ENCODE measurements at regions of chr15 and their contacts with region 1.

Region 1: GRCh38 chr15:101641166-101641764 is 10.9 kb downstream of the TM2D3 start:
- DNase-seq: peak; percentile 68 to 73
- ATAC-seq: peak in 1 of 2 experiments; percentile 75; a peak in 3 of 6 replicates
- H3K4me3 ChIP-seq: no peak overlapping the region
- H3K27ac ChIP-seq: no peak overlapping the region
- H3K4me1 ChIP-seq: peaks cover 11% of the 10 kb centered on the region
- CTCF ChIP-seq: peak; percentile 98
- EP300 ChIP-seq: no peak
- POLR2A ChIP-seq: no peak
- RAD21 ChIP-seq: peak; percentile 94 to 98

Region 2: DNA sequence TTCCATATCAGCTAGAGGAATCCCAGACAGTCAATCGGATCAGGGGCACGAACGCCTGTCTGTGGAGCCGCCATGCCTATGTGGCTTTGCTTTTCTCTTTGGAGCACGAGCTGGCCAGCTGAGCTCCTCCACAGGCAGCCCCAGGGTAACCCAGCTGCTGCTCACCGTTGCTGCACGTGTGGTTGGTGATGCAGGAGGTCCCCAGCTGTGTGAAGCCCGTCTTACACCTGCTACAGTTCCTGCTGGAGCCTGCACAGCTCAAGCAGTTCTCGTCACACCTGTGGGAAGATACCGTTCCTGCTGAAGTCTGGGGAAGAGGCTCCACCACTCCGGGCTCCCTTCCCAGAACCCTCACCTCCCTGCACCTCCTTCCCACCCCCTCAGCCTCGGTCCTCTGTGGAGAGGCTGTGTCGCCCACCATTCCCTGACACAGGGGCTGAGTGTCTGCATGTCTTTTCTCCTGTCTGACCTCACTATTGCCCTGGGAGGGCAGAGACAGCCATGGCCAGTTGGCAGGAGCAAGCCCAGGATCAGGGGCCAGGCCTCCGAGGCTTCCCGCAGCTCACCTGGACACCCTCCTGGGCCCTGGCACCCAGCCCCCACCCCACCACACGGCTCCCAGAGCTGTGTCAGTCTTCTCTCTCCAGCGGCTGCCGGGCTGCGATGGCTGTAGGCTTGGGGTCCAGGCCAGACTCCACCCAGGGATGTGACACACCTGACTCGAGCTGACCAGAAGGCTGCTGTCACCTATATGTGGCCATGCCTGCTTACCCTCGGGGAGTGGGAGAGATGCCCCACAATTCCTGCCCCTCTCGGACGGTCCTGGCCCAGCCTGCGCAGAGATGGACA is 334.0 kb before region 1 on chr15:
- CTCF ChIA-PET with region 1: interaction called, 227 read pairs
- POLR2A ChIA-PET with region 1: no interaction called
- DNase-seq: no peak
- ATAC-seq: peak in 1 of 2 experiments; percentile 11; a peak in 3 of 6 replicates
- H3K4me3 ChIP-seq: no peak overlapping the region
- H3K27ac ChIP-seq: no peak overlapping the region
- H3K4me1 ChIP-seq: no peaks in the 10 kb centered on the region
- CTCF ChIP-seq: no peak
- EP300 ChIP-seq: no peak
- POLR2A ChIP-seq: no peak
- RAD21 ChIP-seq: no peak

Region 3: DNA sequence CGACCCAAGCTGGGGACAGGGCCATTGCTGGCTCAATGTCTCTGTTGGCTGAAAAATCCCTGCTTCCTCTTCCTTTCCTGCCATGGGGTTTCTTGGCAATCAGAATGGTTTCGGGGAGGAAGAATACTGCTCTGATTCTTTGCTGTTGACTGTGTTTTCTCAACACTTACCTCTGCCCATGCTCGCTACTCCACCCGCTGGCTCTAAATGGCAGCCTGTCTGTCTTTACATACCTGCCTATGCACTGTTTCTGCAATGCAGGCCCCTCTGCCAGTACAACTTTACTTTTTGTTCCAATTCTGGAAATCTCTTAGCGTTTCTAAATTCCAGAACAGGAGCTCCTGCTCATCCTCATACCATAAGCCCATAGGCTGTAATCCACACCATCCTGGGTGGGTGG is 307.9 kb before region 1 on chr15:
- CTCF ChIA-PET with region 1: interaction called, 11 read pairs
- POLR2A ChIA-PET with region 1: no interaction called
- DNase-seq: no peak
- ATAC-seq: no peak
- H3K4me3 ChIP-seq: no peak overlapping the region
- H3K27ac ChIP-seq: no peak overlapping the region
- H3K4me1 ChIP-seq: no peaks in the 10 kb centered on the region
- CTCF ChIP-seq: no peak
- EP300 ChIP-seq: no peak
- POLR2A ChIP-seq: no peak
- RAD21 ChIP-seq: no peak

Region 4: GRCh38 chr15:101439285-101439919 is 201.9 kb before region 1 on chr15:
- CTCF ChIA-PET with region 1: interaction called, 14 read pairs
- POLR2A ChIA-PET with region 1: no interaction called
- DNase-seq: peak in 1 of 2 experiments; percentile 65
- ATAC-seq: peak; percentile 51 to 76
- H3K4me3 ChIP-seq: no peak overlapping the region
- H3K27ac ChIP-seq: peak overlapping the region; percentile 66 to 79
- H3K4me1 ChIP-seq: peaks cover 48% of the 10 kb centered on the region
- CTCF ChIP-seq: no peak
- EP300 ChIP-seq: peak in 1 of 2 experiments; percentile 51; a peak in 1 of 5 replicates
- POLR2A ChIP-seq: no peak
- RAD21 ChIP-seq: peak in 1 of 2 experiments; percentile 31; a peak in 2 of 5 replicates

Region 5: DNA sequence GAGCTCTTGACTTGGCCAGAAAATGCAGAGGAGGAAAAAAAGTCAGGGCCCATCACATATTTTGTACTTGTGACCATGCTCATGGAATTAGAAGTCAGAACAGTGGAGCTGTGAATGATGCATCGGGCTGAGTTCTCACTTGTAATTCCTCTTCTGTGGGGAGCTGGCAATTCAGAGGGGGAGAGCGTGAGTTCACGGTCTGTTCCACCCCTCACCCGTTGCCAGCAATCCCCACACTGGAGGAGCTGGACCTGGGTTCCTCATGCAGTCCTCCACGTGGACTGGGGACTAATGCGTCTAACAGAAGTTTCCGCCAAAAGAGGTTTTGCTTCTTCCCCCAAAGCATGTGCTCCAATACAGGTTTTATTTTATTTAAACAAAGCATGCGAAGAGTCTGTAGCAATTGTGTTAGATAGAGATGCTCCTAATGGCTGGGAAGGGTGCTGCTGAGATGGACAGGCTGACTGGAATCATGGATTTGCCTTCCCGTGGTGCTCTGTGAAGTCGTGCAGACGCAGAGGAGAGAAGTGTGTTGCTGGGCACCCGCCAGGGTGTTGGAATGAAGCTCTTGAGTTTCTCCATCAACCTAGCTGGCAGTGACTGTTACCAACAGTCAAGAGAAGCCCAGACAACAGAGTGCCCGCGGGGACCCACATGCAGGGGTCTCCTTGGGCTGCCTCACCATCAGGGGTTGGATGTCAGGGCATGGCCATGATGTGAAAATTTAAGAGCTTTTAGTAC is 74.3 kb before region 1 on chr15:
- CTCF ChIA-PET with region 1: interaction called, 15 read pairs
- POLR2A ChIA-PET with region 1: no interaction called
- DNase-seq: no peak
- ATAC-seq: no peak
- H3K4me3 ChIP-seq: no peak overlapping the region
- H3K27ac ChIP-seq: no peak overlapping the region
- H3K4me1 ChIP-seq: peaks cover 13% of the 10 kb centered on the region; the same call in 2 of the 3 replicates
- CTCF ChIP-seq: no peak
- EP300 ChIP-seq: no peak
- POLR2A ChIP-seq: no peak
- RAD21 ChIP-seq: no peak

Region 6: GRCh38 chr15:101625980-101626379 is 15.3 kb before region 1 on chr15:
- CTCF ChIA-PET with region 1: interaction called, 22 read pairs
- POLR2A ChIA-PET with region 1: no interaction called
- DNase-seq: no peak
- ATAC-seq: no peak
- H3K4me3 ChIP-seq: no peak overlapping the region
- H3K27ac ChIP-seq: no peak overlapping the region
- H3K4me1 ChIP-seq: no peaks in the 10 kb centered on the region
- CTCF ChIP-seq: no peak
- EP300 ChIP-seq: no peak
- POLR2A ChIP-seq: no peak
- RAD21 ChIP-seq: no peak

Region 7: DNA sequence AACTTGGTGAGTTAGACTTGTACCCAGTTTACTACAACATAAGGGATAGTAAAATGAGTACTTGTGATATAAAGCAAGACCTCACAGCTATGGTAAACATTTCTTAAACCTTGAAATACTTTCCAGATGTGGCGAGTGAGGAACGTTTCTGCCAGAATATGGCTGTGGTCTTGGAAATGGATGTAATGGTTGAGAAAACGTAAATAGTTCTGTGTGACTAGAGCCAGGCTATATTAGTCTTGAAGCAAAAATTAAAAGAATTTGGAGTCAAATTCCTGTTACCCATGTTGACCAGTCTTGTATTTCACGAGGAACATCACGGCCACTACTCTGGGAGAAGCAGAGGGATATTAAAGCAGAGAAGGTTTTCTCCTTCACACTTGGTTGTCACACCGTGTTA is 186.0 kb after region 1 on chr15:
- CTCF ChIA-PET with region 1: no interaction called
- POLR2A ChIA-PET with region 1: no interaction called
- DNase-seq: no peak
- ATAC-seq: no peak
- H3K4me3 ChIP-seq: no peak overlapping the region
- H3K27ac ChIP-seq: no peak overlapping the region
- H3K4me1 ChIP-seq: no peaks in the 10 kb centered on the region
- CTCF ChIP-seq: no peak
- EP300 ChIP-seq: no peak
- POLR2A ChIP-seq: no peak
- RAD21 ChIP-seq: no peak